ENCODE measurements at regions of chr5 and their contacts with region 1.

Region 1: GRCh38 chr5:109409844-109410388 is at the start of gene PJA2:
- DNase-seq: peak; percentile 89 to 98 (median 97)
- H3K4me3 ChIP-seq: peak within 1 kb of the TSS; percentile 98
- H3K4me3 Mint-ChIP-seq: peak within 1 kb of the TSS; percentile 95 to 100 (median 97)
- H3K27ac ChIP-seq: peak within 1 kb of the TSS; percentile 98
- H3K27ac Mint-ChIP-seq: peak within 1 kb of the TSS; percentile 97 to 100 (median 100)
- H3K4me1 ChIP-seq: peaks cover 27% of the 10 kb centered on the region
- H3K4me1 Mint-ChIP-seq: peaks cover 38 to 53% (median 53%) of the 10 kb centered on the region in 3 donors
- H3K27me3 ChIP-seq: no peaks in the 10 kb centered on the region
- H3K27me3 Mint-ChIP-seq: peaks cover 0 to 8% of the 10 kb centered on the region in 2 donors
- total RNA-seq, gene PJA2: 37.5 to 39.5 TPM

Region 2: GRCh38 chr5:108381954-108382783 is 1027.7 kb before region 1 on chr5 and contains the start of gene FBXL17:
- CTCF ChIA-PET with region 1: interaction called, 5 read pairs
- POLR2A ChIA-PET with region 1: interaction called, 37 read pairs
- DNase-seq: peak; percentile 84 to 96 (median 92)
- H3K4me3 ChIP-seq: peak within 1 kb of the TSS; percentile 87
- H3K4me3 Mint-ChIP-seq: peak within 1 kb of the TSS; percentile 86 to 98 (median 89)
- H3K27ac ChIP-seq: peak within 1 kb of the TSS; percentile 96
- H3K27ac Mint-ChIP-seq: peak within 1 kb of the TSS; percentile 93 to 99 (median 98)
- H3K4me1 ChIP-seq: peaks cover 31% of the 10 kb centered on the region
- H3K4me1 Mint-ChIP-seq: peaks cover 36 to 50% (median 38%) of the 10 kb centered on the region in 3 donors
- H3K27me3 ChIP-seq: no peaks in the 10 kb centered on the region
- H3K27me3 Mint-ChIP-seq: peaks cover 0 to 1% of the 10 kb centered on the region in 2 donors
- total RNA-seq, gene FBXL17: 6.4 to 6.9 TPM

Region 3: DNA sequence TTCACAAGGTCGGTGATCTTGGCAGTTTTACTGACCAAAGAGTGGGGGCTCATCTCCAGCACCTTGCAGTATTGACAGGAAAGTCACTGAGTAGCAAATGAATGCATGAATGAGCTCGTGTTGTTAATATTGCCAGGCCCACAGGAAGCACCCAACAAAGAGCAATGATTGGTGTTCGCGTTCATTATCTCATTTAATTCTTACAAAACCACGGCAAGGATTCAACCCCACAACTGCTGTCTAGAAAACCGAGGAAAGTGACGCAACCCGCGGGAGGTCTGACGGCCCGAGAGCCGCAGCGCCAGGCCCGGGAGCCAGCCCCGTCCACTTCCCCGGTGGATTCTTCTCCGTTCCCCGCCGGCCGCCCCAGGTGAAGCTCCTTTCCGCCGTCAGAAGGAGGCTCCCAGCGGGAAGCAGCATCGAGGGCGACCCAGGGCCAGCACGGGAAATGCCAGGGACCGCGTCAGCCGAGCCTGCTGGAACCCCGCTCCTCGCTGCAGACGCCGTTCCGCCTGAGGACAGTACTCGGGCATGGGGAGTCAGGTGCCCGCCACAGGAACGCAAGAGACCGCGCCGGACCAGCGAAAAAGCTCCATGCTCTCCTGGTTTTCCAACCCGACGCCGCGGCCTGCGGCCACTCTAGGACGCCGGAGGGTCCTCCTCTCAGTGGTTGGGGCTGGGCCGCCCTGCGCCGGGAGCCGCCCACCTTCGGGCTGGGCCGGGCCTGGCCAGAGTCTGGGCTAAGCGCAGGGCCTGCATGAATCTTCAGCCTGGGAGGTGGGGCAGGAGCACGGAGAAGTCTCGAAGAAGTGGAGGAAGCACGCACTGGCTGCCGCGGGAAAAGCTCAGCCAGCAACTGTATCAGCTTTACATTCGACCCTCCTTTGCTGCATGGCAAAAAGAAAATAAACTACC is 682.0 kb before region 1 on chr5:
- CTCF ChIA-PET with region 1: no interaction called
- POLR2A ChIA-PET with region 1: interaction called, 10 read pairs
- DNase-seq: peak; percentile 15 to 62 (median 42)
- H3K4me3 ChIP-seq: peak overlapping the region; percentile 81
- H3K4me3 Mint-ChIP-seq: peak overlapping the region; percentile 82 to 93 (median 90)
- H3K27ac ChIP-seq: peak overlapping the region; percentile 48
- H3K27ac Mint-ChIP-seq: peak overlapping the region; percentile 60 to 92 (median 80)
- H3K4me1 ChIP-seq: peaks cover 6% of the 10 kb centered on the region
- H3K4me1 Mint-ChIP-seq: peaks cover 20 to 31% (median 30%) of the 10 kb centered on the region in 3 donors
- H3K27me3 ChIP-seq: no peaks in the 10 kb centered on the region
- H3K27me3 Mint-ChIP-seq: peaks cover 5 to 18% of the 10 kb centered on the region in 2 donors

Region 4: GRCh38 chr5:109558952-109559351 is 149.0 kb after region 1 on chr5:
- CTCF ChIA-PET with region 1: no interaction called
- POLR2A ChIA-PET with region 1: no interaction called
- DNase-seq: no peak
- H3K4me3 ChIP-seq: no peak overlapping the region
- H3K4me3 Mint-ChIP-seq: peak overlapping the region in 1 of 7 donors; percentile 15
- H3K27ac ChIP-seq: no peak overlapping the region
- H3K27ac Mint-ChIP-seq: no peak overlapping the region
- H3K4me1 ChIP-seq: no peaks in the 10 kb centered on the region
- H3K4me1 Mint-ChIP-seq: peaks cover 11 to 14% (median 11%) of the 10 kb centered on the region in 3 donors
- H3K27me3 ChIP-seq: no peaks in the 10 kb centered on the region
- H3K27me3 Mint-ChIP-seq: peaks cover 1 to 4% of the 10 kb centered on the region in 2 donors